ENCODE measurements at regions of chr13 and their contacts with region 1.

Region 1: GRCh38 chr13:27194895-27195764 is 23.5 kb upstream of the USP12 start:
- DNase-seq: peak; percentile 97
- H3K4me3 ChIP-seq: peak overlapping the region in 1 of 3 experiments; percentile 19
- H3K27ac ChIP-seq: peak overlapping the region; percentile 94
- H3K4me1 ChIP-seq: peaks cover 22% of the 10 kb centered on the region
- H3K27me3 ChIP-seq: no peaks in the 10 kb centered on the region
- CTCF ChIP-seq: no peak
- POLR2A ChIP-seq: no peak

Region 2: GRCh38 chr13:27171827-27172494 is 23.2 kb before region 1 on chr13:
- CTCF ChIA-PET with region 1: interaction called, 9 read pairs
- POLR2A ChIA-PET with region 1: interaction called, 6 read pairs
- dilution Hi-C with region 1: no loop called
- intact Hi-C with region 1: loop called (anchors 1 kb)
- DNase-seq: peak; percentile 92
- H3K4me3 ChIP-seq: peak overlapping the region; percentile 74 to 86 (median 80)
- H3K27ac ChIP-seq: peak overlapping the region; percentile 88
- H3K4me1 ChIP-seq: peaks cover 38% of the 10 kb centered on the region
- H3K27me3 ChIP-seq: no peaks in the 10 kb centered on the region
- CTCF ChIP-seq: no peak
- POLR2A ChIP-seq: no peak

Region 3: GRCh38 chr13:27182844-27183497 is 12.2 kb before region 1 on chr13:
- CTCF ChIA-PET with region 1: interaction called, 8 read pairs
- POLR2A ChIA-PET with region 1: interaction called, 5 read pairs
- dilution Hi-C with region 1: no loop called
- intact Hi-C with region 1: loop called (anchors 1 kb)
- DNase-seq: peak; percentile 89
- H3K4me3 ChIP-seq: peak overlapping the region in 1 of 3 experiments; percentile 27
- H3K27ac ChIP-seq: peak overlapping the region; percentile 88
- H3K4me1 ChIP-seq: peaks cover 20% of the 10 kb centered on the region
- H3K27me3 ChIP-seq: no peaks in the 10 kb centered on the region
- CTCF ChIP-seq: no peak
- POLR2A ChIP-seq: peak; percentile 46

Region 4: GRCh38 chr13:27251166-27252091 is 56.3 kb after region 1 on chr13 and contains the start of gene RPL21:
- CTCF ChIA-PET with region 1: no interaction called
- POLR2A ChIA-PET with region 1: no interaction called
- dilution Hi-C with region 1: no loop called
- intact Hi-C with region 1: loop called (anchors 1 kb)
- DNase-seq: peak; percentile 98
- H3K4me3 ChIP-seq: peak within 1 kb of the TSS; percentile 70 to 100 (median 96)
- H3K27ac ChIP-seq: peak within 1 kb of the TSS; percentile 94
- H3K4me1 ChIP-seq: peaks cover 19% of the 10 kb centered on the region
- H3K27me3 ChIP-seq: no peaks in the 10 kb centered on the region
- CTCF ChIP-seq: no peak
- POLR2A ChIP-seq: peak; percentile 92
- total RNA-seq, gene RPL21: 871 and 890 TPM in 2 replicates

Region 5: DNA sequence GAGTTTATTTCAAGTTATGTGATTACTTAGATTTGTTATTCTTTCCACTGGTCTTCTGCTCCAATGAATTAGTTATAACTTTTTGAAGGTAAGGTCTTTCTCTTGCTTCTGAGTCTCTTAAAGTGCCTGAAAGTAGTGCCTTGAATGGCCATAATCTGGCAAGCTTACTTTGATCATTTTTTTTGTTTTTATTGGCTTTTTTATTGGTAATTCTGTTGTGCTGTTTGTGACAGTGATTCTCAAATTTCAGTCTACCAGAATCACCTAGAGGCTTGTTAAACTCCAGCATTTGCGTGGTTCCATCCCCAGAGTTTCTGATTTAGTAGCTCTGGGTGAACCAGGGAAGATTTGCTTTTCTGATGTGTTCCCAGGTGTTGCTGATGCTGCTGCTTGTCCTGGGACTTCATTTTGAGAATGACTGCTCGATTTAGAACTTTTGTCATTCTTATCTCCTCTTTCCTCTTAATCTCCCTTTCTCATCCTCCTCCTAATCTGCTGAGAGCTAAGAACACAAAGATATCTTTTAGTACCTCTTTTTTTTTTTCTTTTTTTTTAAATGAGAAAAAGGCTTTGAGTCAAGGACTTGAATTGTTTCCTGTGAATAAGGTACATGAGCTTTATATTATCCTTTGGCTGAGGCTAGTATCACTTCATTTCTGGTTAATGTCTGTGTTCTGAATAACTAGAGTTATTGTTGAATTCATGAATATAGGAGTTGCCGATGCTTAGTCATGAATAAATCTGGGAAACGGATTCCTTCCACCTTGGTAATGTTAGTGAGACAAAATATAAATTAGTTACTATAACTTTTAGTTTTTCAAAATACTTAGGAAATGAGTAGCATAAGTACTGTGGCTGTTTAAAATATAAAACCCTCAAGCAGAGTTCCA is 1034.6 kb after region 1 on chr13:
- CTCF ChIA-PET with region 1: no interaction called
- POLR2A ChIA-PET with region 1: no interaction called
- dilution Hi-C with region 1: no loop called
- intact Hi-C with region 1: no loop called
- DNase-seq: no peak
- H3K4me3 ChIP-seq: no peak overlapping the region
- H3K27ac ChIP-seq: no peak overlapping the region
- H3K4me1 ChIP-seq: no peaks in the 10 kb centered on the region
- H3K27me3 ChIP-seq: no peaks in the 10 kb centered on the region
- CTCF ChIP-seq: no peak
- POLR2A ChIP-seq: no peak